ENCODE measurements at regions of chr3 and their contacts with region 1.

Region 1: GRCh38 chr3:13452490-13453335 is 27.4 kb upstream of the HDAC11 start:
- DNase-seq: peak in 3 of 5 donors; percentile 24 to 84 (median 75)
- H3K4me3 ChIP-seq: peak overlapping the region in 2 of 3 donors; percentile 69 to 89
- H3K27ac ChIP-seq: peak overlapping the region; percentile 94 to 98
- H3K4me1 ChIP-seq: peaks cover 0 to 2% (median 0%) of the 10 kb centered on the region in 3 donors
- H3K27me3 ChIP-seq: no peaks in the 10 kb centered on the region
- CTCF ChIP-seq: peak; percentile 59

Region 2: GRCh38 chr3:13040361-13041074 is 412.2 kb before region 1 on chr3:
- intact Hi-C with region 1: no loop called
- DNase-seq: peak in 1 of 5 donors; percentile 64
- H3K4me3 ChIP-seq: no peak overlapping the region
- H3K27ac ChIP-seq: no peak overlapping the region
- H3K4me1 ChIP-seq: no peaks in the 10 kb centered on the region
- H3K27me3 ChIP-seq: no peaks in the 10 kb centered on the region
- CTCF ChIP-seq: no peak

Region 3: DNA sequence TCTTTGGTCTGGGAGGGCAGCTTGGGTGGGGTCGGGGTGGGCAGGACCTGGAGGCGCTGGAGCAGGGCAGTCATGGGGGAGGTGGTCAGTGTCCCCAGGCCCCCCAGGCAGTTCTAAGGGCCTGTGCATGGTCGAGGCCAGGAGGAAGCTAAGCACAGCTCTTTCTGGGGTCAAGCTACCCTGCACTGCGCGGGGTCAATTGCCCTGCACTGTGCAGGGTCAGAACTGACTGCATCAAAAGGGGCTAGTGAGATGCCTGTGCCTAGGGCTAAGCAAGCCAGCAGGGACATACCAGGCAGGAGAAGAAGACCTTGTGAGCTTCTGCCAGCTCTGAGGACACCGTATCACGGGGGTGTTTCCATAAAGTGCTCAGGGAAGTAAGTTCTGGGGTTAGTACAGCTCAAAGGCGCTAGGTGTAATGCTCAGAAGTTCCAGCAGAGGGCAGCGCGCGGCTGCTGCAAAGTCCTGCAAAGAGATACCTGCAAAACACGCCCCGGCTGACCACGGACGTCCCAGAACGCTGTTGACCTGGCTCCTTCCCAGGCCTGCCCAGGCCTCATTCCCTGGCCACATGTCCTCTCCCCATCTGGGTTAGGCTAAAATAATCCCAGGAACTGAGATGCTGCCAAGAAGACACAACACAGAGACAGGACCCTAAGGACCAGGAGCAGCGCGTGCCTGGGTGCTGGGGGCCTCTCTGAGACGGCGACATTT is 360.7 kb before region 1 on chr3:
- intact Hi-C with region 1: loop called (anchors 5 kb)
- DNase-seq: peak; percentile 81 to 89 (median 85)
- H3K4me3 ChIP-seq: no peak overlapping the region
- H3K27ac ChIP-seq: no peak overlapping the region
- H3K4me1 ChIP-seq: no peaks in the 10 kb centered on the region
- H3K27me3 ChIP-seq: no peaks in the 10 kb centered on the region
- CTCF ChIP-seq: peak; percentile 96

Region 4: DNA sequence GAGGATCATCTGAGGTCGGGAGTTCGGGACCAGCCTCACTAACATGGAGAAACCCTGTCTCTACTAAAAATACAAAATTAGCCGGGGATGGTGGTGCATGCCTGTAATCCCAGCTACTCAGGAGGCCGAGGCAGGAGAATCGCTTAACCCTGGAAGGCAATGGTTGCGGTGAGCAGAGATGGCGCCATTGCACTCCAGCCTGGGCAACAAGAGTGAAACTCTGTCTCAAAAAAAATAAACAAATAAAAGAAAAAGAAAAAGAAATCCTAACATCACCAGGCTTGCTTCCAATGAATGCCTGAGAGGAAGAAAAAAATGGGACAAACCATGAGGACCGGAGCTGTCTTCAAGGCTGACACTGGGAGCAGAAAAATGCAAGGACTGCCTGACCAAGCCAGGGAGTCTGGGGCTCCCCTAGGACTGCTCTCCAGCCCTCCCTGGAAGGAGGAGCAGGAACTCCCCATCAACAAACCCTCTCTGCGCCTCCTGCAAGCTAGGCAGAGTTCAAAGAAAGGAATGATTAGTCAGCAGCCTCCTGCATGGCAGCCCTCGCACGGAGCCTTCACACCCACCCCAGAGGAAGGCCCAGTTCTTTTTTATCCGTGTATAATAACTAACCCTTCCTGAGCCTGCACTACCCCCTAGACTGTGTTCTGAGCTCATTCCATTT is 88.0 kb before region 1 on chr3:
- intact Hi-C with region 1: no loop called
- DNase-seq: peak in 1 of 5 donors; percentile 8
- H3K4me3 ChIP-seq: no peak overlapping the region
- H3K27ac ChIP-seq: no peak overlapping the region
- H3K4me1 ChIP-seq: no peaks in the 10 kb centered on the region
- H3K27me3 ChIP-seq: no peaks in the 10 kb centered on the region
- CTCF ChIP-seq: no peak

Measured in kidney (tissue), 22 donors.